K562 (cell line): ENCODE measurements at regions of chr10 and their contacts with region 1.

Region 1: GRCh38 chr10:113843972-113844485 is 9.9 kb downstream of the DCLRE1A start:
- DNase-seq: peak; percentile 11 to 16 (median 13)
- ATAC-seq: peak; percentile 68
- H3K4me3 ChIP-seq: no peak overlapping the region
- H3K27ac ChIP-seq: peak overlapping the region; percentile 57; the same call in 2 of the 3 replicates
- H3K4me1 ChIP-seq: peaks cover 0 to 3% of the 10 kb centered on the region in 2 experiments; a peak in 2 of 5 replicates
- H3K27me3 ChIP-seq: no peaks in the 10 kb centered on the region
- CTCF ChIP-seq: no peak
- EP300 ChIP-seq: no peak
- POLR2A ChIP-seq: no peak
- RAD21 ChIP-seq: no peak

Region 2: DNA sequence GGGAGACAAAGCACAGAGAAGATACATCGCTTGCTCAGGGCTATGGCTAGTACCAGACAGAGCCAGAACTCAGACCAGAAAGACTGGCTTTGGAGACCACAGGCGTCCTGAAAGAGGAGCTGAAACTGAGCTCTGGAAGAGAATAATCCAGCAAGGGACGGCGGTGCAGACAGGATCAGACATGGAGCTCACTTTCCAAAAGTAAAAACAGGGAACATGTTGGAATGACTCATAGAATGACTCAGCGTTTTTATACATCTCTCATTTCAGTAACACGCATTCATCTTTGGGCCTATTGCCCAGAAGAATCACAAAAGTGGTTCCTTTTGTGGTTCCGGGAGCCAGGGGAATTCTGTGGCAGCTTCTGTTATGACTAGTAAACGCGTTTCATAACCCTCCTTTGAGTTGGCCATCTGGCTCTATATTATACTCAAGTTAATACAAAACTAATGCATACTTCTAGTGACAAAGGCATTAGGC is 55.4 kb before region 1 on chr10:
- CTCF ChIA-PET with region 1: no interaction called
- POLR2A ChIA-PET with region 1: no interaction called
- in situ Hi-C with region 1: no loop called
- intact Hi-C with region 1: no loop called
- DNase-seq: peak; percentile 9 to 29 (median 10)
- ATAC-seq: no peak; the same call in 1 of the 3 replicates
- H3K4me3 ChIP-seq: no peak overlapping the region
- H3K27ac ChIP-seq: no peak overlapping the region; the same call in 2 of the 3 replicates
- H3K4me1 ChIP-seq: peaks cover 0 to 5% of the 10 kb centered on the region in 2 experiments; a peak in 2 of 5 replicates
- H3K27me3 ChIP-seq: peaks cover 0 to 7% of the 10 kb centered on the region in 2 experiments; a peak in 2 of 5 replicates
- CTCF ChIP-seq: no peak
- EP300 ChIP-seq: peak; percentile 41; the same call in 1 of the 2 replicates
- POLR2A ChIP-seq: no peak
- RAD21 ChIP-seq: no peak

Region 3: DNA sequence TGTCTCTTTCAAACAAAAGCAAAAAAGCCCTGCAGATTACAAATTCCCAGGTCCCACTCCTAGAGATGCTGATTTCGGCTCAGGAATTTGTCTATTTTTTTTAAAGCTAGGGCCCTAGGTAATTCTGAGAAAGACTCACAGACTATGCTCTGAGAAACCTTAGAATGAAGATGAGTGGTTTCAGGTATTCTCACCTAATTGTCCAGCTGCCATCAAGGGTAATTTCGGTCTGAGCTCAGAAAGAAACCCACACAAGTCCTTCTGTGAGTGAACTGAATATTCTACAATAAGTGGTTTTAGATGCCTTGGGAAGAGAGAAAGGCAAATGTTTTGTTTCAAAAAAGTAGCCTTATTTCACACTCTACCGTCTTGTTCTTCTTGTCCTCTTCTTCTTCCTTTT is 35.9 kb before region 1 on chr10:
- CTCF ChIA-PET with region 1: no interaction called
- POLR2A ChIA-PET with region 1: no interaction called
- in situ Hi-C with region 1: no loop called
- intact Hi-C with region 1: loop called (anchors 5 kb)
- DNase-seq: no peak
- ATAC-seq: no peak
- H3K4me3 ChIP-seq: no peak overlapping the region
- H3K27ac ChIP-seq: no peak overlapping the region
- H3K4me1 ChIP-seq: no peaks in the 10 kb centered on the region
- H3K27me3 ChIP-seq: peaks cover 0 to 7% of the 10 kb centered on the region in 2 experiments; a peak in 1 of 5 replicates
- CTCF ChIP-seq: no peak
- EP300 ChIP-seq: no peak
- POLR2A ChIP-seq: no peak
- RAD21 ChIP-seq: no peak

Region 4: DNA sequence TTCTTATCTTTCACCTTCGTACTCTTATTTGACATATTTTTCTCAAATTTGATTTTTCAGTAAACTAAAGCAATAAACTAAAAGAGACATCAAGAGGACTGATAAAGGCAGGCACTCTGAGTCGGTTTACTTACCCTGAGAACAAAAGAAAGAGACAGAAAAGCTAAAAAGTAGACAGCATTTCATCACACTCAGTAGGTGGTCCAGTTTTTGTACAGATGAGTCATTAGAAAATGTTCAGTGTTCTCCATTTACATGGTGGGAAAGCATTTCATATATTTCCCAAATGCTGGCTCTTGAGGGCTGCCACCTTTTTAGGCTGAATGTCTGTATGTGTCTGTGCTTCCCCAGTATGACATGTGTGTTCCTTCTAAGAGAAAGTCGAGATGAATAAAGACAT is 63.1 kb after region 1 on chr10:
- CTCF ChIA-PET with region 1: no interaction called
- POLR2A ChIA-PET with region 1: no interaction called
- in situ Hi-C with region 1: no loop called
- intact Hi-C with region 1: no loop called
- DNase-seq: no peak
- ATAC-seq: no peak
- H3K4me3 ChIP-seq: no peak overlapping the region
- H3K27ac ChIP-seq: no peak overlapping the region
- H3K4me1 ChIP-seq: no peaks in the 10 kb centered on the region
- H3K27me3 ChIP-seq: no peaks in the 10 kb centered on the region
- CTCF ChIP-seq: no peak
- EP300 ChIP-seq: no peak
- POLR2A ChIP-seq: no peak
- RAD21 ChIP-seq: no peak

Region 5: GRCh38 chr10:114009281-114009996 is 165.4 kb after region 1 on chr10:
- CTCF ChIA-PET with region 1: no interaction called
- POLR2A ChIA-PET with region 1: no interaction called
- in situ Hi-C with region 1: no loop called
- intact Hi-C with region 1: no loop called
- DNase-seq: no peak
- ATAC-seq: no peak
- H3K4me3 ChIP-seq: no peak overlapping the region
- H3K27ac ChIP-seq: no peak overlapping the region
- H3K4me1 ChIP-seq: no peaks in the 10 kb centered on the region
- H3K27me3 ChIP-seq: peaks cover 0 to 11% of the 10 kb centered on the region in 2 experiments; a peak in 1 of 5 replicates
- CTCF ChIP-seq: no peak
- EP300 ChIP-seq: no peak
- POLR2A ChIP-seq: no peak
- RAD21 ChIP-seq: no peak